ENCODE measurements at regions of chr6 and their contacts with region 1.

Region 1: GRCh38 chr6:96542702-96543101 is 20.2 kb upstream of the FHL5 start:
- DNase-seq: no peak
- ATAC-seq: no peak
- H3K4me3 ChIP-seq: no peak overlapping the region
- H3K27ac ChIP-seq: no peak overlapping the region
- H3K4me1 ChIP-seq: no peaks in the 10 kb centered on the region
- H3K27me3 ChIP-seq: no peaks in the 10 kb centered on the region
- CTCF ChIP-seq: peak; percentile 21

Region 2: DNA sequence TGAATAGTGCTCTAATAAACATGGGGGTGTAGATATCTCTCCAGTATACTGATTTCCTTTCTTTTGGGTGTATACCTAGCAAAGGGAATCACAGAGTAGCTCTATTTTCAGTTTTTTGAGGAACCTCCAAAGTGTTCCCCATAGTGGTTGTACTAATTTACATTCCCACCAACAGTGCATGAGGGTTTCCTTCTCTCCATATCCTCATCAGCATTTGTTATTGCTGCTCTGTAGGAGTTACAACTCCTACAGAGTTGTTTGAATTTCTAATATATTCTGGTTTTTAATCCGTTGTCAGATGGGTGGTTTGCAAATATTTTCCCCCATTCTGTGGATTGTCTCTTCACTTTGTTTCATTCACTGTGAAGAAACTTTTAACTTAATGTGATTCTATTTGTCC is 319.0 kb before region 1 on chr6:
- intact Hi-C with region 1: no loop called
- DNase-seq: no peak
- ATAC-seq: no peak
- H3K4me3 ChIP-seq: no peak overlapping the region
- H3K27ac ChIP-seq: no peak overlapping the region
- H3K4me1 ChIP-seq: no peaks in the 10 kb centered on the region
- H3K27me3 ChIP-seq: no peaks in the 10 kb centered on the region
- CTCF ChIP-seq: no peak

Region 3: GRCh38 chr6:96532399-96532798 is 10.3 kb before region 1 on chr6:
- intact Hi-C with region 1: loop called in 1 of 2 experiments (anchors 2 kb)
- DNase-seq: no peak
- ATAC-seq: no peak
- H3K4me3 ChIP-seq: no peak overlapping the region
- H3K27ac ChIP-seq: no peak overlapping the region
- H3K4me1 ChIP-seq: no peaks in the 10 kb centered on the region
- H3K27me3 ChIP-seq: no peaks in the 10 kb centered on the region
- CTCF ChIP-seq: no peak